ENCODE measurements at regions of chr16 and their contacts with region 1.

Region 1: GRCh38 chr16:23556881-23557778 is at the starts of genes EARS2 and UBFD1:
- DNase-seq: peak; percentile 99
- H3K4me3 Mint-ChIP-seq: peak within 1 kb of the TSS; percentile 98
- H3K27ac Mint-ChIP-seq: peak within 1 kb of the TSS; percentile 96
- H3K4me1 Mint-ChIP-seq: peaks cover 34% of the 10 kb centered on the region
- H3K27me3 Mint-ChIP-seq: no peaks in the 10 kb centered on the region
- total RNA-seq, gene EARS2: 29.7 and 31.4 TPM in 2 replicates
- total RNA-seq, gene UBFD1: 62.0 and 70.6 TPM in 2 replicates

Region 2: DNA sequence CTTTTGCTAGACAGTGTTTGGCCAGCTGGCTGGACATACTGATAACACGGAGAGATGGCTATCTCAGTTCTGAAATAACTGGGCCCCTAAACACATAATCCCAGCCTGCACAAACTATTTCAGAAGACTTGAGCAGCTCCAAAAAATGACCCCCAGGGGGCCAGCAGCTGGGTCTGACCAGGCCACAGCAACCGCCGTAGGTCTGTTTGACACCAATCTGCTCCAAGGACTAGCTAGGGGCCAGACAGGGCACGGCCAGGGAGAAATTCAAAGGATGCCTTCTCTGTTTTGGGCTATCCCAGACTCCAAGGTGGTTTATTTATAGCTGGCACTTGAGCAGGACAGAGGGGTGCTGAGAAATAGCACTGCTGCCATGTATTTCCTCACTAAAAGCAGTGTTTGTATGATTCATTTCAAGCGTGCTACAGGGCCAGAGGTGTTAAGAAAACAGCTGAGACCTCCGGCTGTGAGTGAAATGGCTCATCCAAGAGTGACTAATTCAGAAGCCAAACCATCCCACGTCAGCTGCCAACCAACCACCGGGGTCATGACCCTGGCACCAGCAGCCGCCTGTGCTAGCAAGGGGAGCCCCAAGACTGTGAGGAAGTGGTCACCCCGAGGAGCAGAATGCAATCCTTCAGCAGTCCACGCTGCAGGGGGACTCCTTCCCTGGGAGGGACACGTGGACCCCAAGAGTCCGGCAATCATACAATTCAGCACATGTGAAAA is 52.5 kb before region 1 on chr16:
- intact Hi-C with region 1: loop called (anchors 2 kb)
- DNase-seq: peak; percentile 88
- H3K4me3 Mint-ChIP-seq: peak overlapping the region; percentile 53
- H3K27ac Mint-ChIP-seq: peak overlapping the region; percentile 86
- H3K4me1 Mint-ChIP-seq: peaks cover 50% of the 10 kb centered on the region
- H3K27me3 Mint-ChIP-seq: no peaks in the 10 kb centered on the region

Region 3: DNA sequence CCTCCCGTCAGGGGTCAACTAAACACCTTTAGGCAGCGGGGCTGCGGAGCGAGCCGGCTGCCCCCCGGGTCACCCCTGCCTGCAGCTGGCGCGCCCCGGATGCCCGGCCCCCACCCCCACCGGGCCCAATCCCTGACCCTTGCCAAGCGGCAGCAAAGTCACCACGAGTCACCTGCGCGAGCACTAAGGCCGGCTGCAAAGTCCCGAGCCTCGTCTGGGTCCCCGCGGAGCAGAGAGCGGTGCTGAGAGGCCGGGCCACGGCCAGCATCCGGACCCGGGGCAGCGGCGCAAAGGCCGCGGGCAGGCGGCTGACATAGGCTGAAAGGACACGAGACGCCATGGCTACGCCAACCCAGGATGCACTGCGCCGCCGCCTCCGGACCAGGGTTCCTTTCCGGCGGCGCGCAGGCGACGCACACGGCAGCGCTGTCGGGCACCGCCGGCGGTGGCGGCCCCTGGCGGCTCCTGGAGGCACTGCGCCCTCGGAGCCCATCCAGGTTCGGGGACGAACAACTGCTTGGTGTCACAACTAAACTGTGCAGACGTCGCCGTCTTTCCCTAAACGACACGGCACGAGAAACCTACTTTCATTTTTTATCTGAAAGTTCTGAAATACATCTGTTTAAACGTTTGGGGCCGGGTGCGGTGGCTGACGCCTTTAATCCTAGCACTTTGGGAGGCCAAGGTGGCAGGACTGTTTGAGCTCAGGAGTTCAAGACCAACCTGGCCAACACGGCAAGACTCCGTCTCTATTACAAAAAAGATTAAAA is 39.0 kb after region 1 on chr16 and contains the start of gene NDUFAB1:
- intact Hi-C with region 1: loop called (anchors 1 kb)
- DNase-seq: peak; percentile 98
- H3K4me3 Mint-ChIP-seq: peak within 1 kb of the TSS; percentile 88
- H3K27ac Mint-ChIP-seq: peak within 1 kb of the TSS; percentile 83
- H3K4me1 Mint-ChIP-seq: peaks cover 14% of the 10 kb centered on the region
- H3K27me3 Mint-ChIP-seq: no peaks in the 10 kb centered on the region
- total RNA-seq, gene NDUFAB1: 161 and 163 TPM in 2 replicates

Region 4: DNA sequence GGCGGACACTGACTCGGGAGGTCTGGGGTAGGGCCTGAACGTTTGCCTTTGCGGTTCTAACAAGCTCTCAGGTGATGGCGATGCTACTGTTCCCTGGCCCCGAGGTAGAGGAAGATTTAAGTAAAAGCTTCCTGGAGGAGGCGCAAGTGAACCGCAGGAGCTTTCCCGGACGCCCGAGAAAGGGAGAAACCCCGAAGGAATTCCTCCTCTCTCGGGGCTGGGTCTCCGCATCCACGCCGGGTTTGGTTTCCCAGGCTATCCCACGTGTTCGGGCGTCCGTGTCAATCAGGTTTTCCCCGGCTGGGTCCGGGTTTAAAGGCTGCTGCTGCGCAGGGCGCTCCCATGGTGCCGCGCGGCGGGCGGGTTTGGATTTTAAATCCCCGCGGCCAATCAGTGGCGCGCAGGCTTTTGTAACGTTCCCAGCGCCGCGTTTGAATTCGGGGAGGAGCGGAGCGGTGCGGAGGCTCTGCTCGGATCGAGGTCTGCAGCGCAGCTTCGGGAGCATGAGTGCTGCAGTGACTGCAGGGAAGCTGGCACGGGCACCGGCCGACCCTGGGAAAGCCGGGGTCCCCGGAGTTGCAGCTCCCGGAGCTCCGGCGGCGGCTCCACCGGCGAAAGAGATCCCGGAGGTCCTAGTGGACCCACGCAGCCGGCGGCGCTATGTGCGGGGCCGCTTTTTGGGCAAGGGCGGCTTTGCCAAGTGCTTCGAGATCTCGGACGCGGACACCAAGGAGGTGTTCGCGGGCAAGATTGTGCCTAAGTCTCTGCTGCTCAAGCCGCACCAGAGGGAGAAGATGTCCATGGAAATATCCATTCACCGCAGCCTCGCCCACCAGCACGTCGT is 121.5 kb after region 1 on chr16 and contains the start of gene PLK1:
- intact Hi-C with region 1: loop called (anchors 1 kb)
- DNase-seq: peak; percentile 96
- H3K4me3 Mint-ChIP-seq: peak within 1 kb of the TSS; percentile 92
- H3K27ac Mint-ChIP-seq: peak within 1 kb of the TSS; percentile 85
- H3K4me1 Mint-ChIP-seq: peaks cover 36% of the 10 kb centered on the region
- H3K27me3 Mint-ChIP-seq: no peaks in the 10 kb centered on the region
- total RNA-seq, gene PLK1: 45.7 and 51.7 TPM in 2 replicates

Region 5: GRCh38 chr16:24539291-24539849 is 982.2 kb after region 1 on chr16 and contains the start of gene RBBP6:
- intact Hi-C with region 1: loop called (anchors 5 kb)
- DNase-seq: peak; percentile 98
- H3K4me3 Mint-ChIP-seq: peak within 1 kb of the TSS; percentile 100
- H3K27ac Mint-ChIP-seq: peak within 1 kb of the TSS; percentile 100
- H3K4me1 Mint-ChIP-seq: peaks cover 20% of the 10 kb centered on the region
- H3K27me3 Mint-ChIP-seq: no peaks in the 10 kb centered on the region
- total RNA-seq, gene RBBP6: 65.7 and 73.8 TPM in 2 replicates